HepG2 (cell line): ENCODE measurements at regions of chr2 and their contacts with region 1.

Region 1: DNA sequence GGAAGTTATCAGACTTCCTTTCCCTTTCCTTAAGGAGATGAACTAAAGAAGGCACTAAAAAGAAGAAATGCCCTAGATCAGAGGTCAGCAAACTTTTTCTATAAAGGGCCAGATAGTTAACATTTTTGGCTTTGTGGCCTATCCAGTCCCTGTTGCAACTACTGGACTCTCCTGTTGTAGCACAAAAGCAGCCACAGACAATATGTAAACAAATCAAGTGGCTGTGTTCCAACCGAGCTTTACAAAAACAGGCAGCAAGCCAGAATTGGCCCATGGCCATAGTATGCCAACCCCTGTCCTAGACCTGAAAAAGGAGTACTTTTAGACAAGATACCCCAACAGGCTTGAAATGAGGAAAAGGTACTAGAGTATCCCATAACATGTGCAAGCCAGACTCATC is 10.9 kb downstream of the NHEJ1 start:
- DNase-seq: peak; percentile 62
- ATAC-seq: peak; percentile 64
- H3K4me3 ChIP-seq: no peak overlapping the region
- H3K27ac ChIP-seq: no peak overlapping the region
- H3K4me1 ChIP-seq: peaks cover 10% of the 10 kb centered on the region
- H3K27me3 ChIP-seq: no peaks in the 10 kb centered on the region
- CTCF ChIP-seq: no peak
- EP300 ChIP-seq: no peak
- POLR2A ChIP-seq: no peak
- RAD21 ChIP-seq: no peak

Region 2: GRCh38 chr2:219126551-219126950 is 23.1 kb before region 1 on chr2:
- CTCF ChIA-PET with region 1: no interaction called
- POLR2A ChIA-PET with region 1: no interaction called
- in situ Hi-C with region 1: no loop called
- intact Hi-C with region 1: loop called (anchors 2 kb)
- DNase-seq: peak; percentile 78
- ATAC-seq: peak; percentile 89
- H3K4me3 ChIP-seq: no peak overlapping the region
- H3K27ac ChIP-seq: no peak overlapping the region
- H3K4me1 ChIP-seq: peaks cover 67% of the 10 kb centered on the region
- H3K27me3 ChIP-seq: no peaks in the 10 kb centered on the region
- CTCF ChIP-seq: no peak
- EP300 ChIP-seq: peak in 1 of 2 experiments; percentile 25; a peak in 1 of 4 replicates
- POLR2A ChIP-seq: no peak
- RAD21 ChIP-seq: no peak